HEK293T (cell line): ENCODE measurements at regions of chr19 and their contacts with region 1.

Region 1: GRCh38 chr19:37931881-37932655 is 25.1 kb downstream of the SIPA1L3 start:
- DNase-seq: no peak

Region 2: GRCh38 chr19:37906869-37907734 is 25.0 kb before region 1 on chr19 and contains the start of gene SIPA1L3:
- CTCF ChIA-PET with region 1: no interaction called
- POLR2A ChIA-PET with region 1: interaction called, 11 read pairs
- DNase-seq: peak; percentile 88